H1 (cell line): ENCODE measurements at regions of chr6 and their contacts with region 1.

Region 1: GRCh38 chr6:2848851-2849250 is 7.2 kb upstream of the SERPINB1 start:
- DNase-seq: no peak
- H3K4me3 ChIP-seq: no peak overlapping the region
- H3K27ac ChIP-seq: no peak overlapping the region
- H3K4me1 ChIP-seq: peaks cover 4 to 25% (median 9%) of the 10 kb centered on the region in 4 experiments
- H3K27me3 ChIP-seq: no peaks in the 10 kb centered on the region
- CTCF ChIP-seq: no peak
- EP300 ChIP-seq: no peak
- POLR2A ChIP-seq: peak in 1 of 2 experiments; percentile 62; a peak in 1 of 3 replicates
- RAD21 ChIP-seq: no peak

Region 2: DNA sequence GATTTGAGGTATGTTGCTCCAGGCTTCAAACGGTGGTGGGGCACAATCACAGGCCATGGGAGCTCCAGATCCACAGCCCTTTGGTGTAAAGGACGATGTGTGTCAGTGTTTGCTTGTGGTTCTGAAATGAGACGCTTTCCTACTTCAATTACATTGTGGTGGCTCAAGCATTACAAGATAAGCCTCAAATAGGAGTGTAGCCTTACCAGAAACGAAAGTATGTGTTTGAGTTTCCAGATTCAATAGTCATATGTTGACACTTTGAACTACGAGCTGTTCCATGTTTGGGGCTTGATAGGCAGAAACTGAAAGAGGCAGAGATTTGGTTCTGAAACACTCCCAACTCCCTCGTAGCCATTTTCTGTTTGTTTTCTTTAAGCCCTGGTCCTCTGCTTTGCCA is 285.2 kb before region 1 on chr6:
- CTCF ChIA-PET with region 1: no interaction called
- POLR2A ChIA-PET with region 1: no interaction called
- DNase-seq: no peak
- H3K4me3 ChIP-seq: no peak overlapping the region
- H3K27ac ChIP-seq: no peak overlapping the region
- H3K4me1 ChIP-seq: no peaks in the 10 kb centered on the region
- H3K27me3 ChIP-seq: no peaks in the 10 kb centered on the region
- CTCF ChIP-seq: no peak
- EP300 ChIP-seq: no peak
- POLR2A ChIP-seq: no peak
- RAD21 ChIP-seq: no peak

Region 3: DNA sequence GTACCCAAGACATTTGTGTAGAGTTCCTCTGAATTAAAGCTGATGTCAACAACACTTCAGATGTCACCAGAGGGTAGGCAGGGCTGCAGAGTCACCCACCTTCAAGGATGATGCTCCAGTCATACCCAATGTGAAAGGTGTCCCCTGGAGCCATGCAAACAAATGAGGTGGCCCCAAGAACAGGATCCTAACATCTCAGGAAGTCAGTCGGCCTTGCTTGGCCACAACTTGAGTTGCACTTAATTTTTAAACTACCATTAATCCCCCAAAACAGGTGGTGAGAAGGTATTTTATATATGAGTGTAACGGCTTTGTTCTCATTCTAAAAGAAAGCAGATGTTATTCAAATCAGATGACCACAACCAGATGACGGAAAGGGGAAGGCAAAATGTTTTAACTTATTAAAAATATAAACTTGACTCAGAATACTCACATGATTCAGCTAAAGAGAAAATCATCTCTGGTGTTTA is 13.9 kb after region 1 on chr6:
- CTCF ChIA-PET with region 1: interaction called, 27 read pairs
- POLR2A ChIA-PET with region 1: interaction called, 18 read pairs
- DNase-seq: no peak
- H3K4me3 ChIP-seq: no peak overlapping the region
- H3K27ac ChIP-seq: no peak overlapping the region
- H3K4me1 ChIP-seq: peaks cover 8 to 27% (median 17%) of the 10 kb centered on the region in 4 experiments
- H3K27me3 ChIP-seq: no peaks in the 10 kb centered on the region
- CTCF ChIP-seq: no peak
- EP300 ChIP-seq: no peak
- POLR2A ChIP-seq: no peak
- RAD21 ChIP-seq: no peak

Region 4: GRCh38 chr6:2911171-2911570 is 62.3 kb after region 1 on chr6:
- CTCF ChIA-PET with region 1: interaction called, 23 read pairs
- POLR2A ChIA-PET with region 1: interaction called, 3 read pairs
- DNase-seq: no peak
- H3K4me3 ChIP-seq: no peak overlapping the region
- H3K27ac ChIP-seq: no peak overlapping the region
- H3K4me1 ChIP-seq: peaks cover 2 to 19% (median 15%) of the 10 kb centered on the region in 4 experiments; a peak in 6 of 7 replicates
- H3K27me3 ChIP-seq: no peaks in the 10 kb centered on the region
- CTCF ChIP-seq: no peak
- EP300 ChIP-seq: no peak
- POLR2A ChIP-seq: no peak
- RAD21 ChIP-seq: no peak

Region 5: DNA sequence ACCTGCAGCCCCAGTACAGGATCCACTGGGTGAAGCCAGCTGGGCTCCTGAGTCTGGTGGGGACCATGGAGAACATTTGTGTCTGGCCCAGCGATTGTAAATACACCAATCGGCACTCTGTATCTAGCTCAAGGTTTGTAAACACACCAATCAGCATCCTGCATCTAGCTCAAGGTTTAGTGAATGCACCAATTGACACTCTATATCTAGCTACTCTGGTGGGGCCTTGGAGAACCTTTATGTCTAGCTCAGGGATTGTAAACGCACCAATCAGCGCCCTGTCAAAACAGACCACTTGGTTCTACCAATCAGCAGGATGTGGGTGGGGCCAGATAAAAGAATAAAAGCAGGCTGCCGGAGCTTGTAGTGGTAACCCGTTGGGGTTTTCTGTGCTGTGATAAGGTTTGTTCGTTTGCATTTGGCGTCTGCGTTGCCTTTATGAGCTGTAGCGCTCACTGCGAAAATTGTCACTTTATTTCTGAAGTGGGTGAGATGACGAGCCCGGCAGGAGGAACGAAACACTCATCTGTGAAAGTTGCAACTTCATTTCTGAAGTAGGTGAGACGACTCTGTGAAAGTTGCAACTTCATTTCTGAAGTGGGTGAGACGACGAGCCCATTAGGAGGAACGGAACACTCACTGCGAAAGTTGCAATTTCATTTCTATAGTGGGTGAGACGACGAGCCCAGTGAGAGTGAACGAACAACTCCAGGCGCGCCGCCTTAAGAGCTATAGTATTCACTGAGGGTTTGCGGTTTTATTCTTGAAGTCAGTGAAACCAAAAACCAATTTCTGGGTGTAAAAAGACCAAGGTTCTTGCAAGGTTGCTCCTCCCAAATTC is 91.4 kb after region 1 on chr6:
- CTCF ChIA-PET with region 1: interaction called, 37 read pairs
- POLR2A ChIA-PET with region 1: interaction called, 3 read pairs
- DNase-seq: peak in 1 of 2 experiments; percentile 33
- H3K4me3 ChIP-seq: no peak overlapping the region
- H3K27ac ChIP-seq: no peak overlapping the region
- H3K4me1 ChIP-seq: no peaks in the 10 kb centered on the region; a peak in 2 of 7 replicates
- H3K27me3 ChIP-seq: no peaks in the 10 kb centered on the region; a peak in 1 of 7 replicates
- CTCF ChIP-seq: no peak
- EP300 ChIP-seq: no peak
- POLR2A ChIP-seq: no peak
- RAD21 ChIP-seq: no peak